ENCODE measurements at regions of chr6 and their contacts with region 1.

Region 1: GRCh38 chr6:105363100-105363754 is 39.7 kb downstream of the PREP start:
- DNase-seq: peak in 1 of 2 donors; percentile 32
- ATAC-seq: peak; percentile 39 to 62
- H3K4me3 ChIP-seq: no peak overlapping the region
- H3K27ac ChIP-seq: peak overlapping the region; percentile 63 to 74 (median 67)
- H3K4me1 ChIP-seq: peaks cover 27 to 29% of the 10 kb centered on the region in 2 donors
- H3K27me3 ChIP-seq: no peaks in the 10 kb centered on the region
- CTCF ChIP-seq: peak in 4 of 5 experiments; percentile 31 to 37 (median 35)
- POLR2A ChIP-seq: no peak

Region 2: DNA sequence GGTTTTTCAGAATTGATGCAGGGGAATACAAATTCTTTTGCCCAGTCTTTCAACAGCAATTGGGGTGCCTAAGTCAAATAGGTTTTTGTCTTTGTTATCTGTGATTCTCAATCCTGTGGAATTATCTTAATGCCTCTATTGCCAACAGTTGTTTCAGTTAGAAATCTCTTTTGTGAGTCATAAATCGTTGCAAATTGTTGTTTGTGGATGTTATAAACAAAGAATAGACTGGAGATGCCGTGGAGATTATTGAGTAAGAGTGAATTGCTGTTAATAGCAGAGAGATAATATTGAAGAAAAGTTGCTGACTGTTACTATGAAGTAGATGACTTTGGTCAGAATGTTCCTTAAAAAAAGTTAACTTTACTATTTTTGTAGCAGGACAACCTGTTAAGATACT is 119.7 kb before region 1 on chr6:
- in situ Hi-C with region 1: no loop called
- intact Hi-C with region 1: no loop called
- DNase-seq: no peak
- ATAC-seq: no peak
- H3K4me3 ChIP-seq: no peak overlapping the region
- H3K27ac ChIP-seq: no peak overlapping the region
- H3K4me1 ChIP-seq: peaks cover 0 to 3% of the 10 kb centered on the region in 2 donors
- H3K27me3 ChIP-seq: no peaks in the 10 kb centered on the region
- CTCF ChIP-seq: no peak
- POLR2A ChIP-seq: no peak

Region 3: GRCh38 chr6:105301072-105301503 is 62.1 kb before region 1 on chr6:
- in situ Hi-C with region 1: no loop called
- intact Hi-C with region 1: loop called (anchors 5 kb)
- DNase-seq: peak; percentile 28 to 58
- ATAC-seq: peak; percentile 85 to 91
- H3K4me3 ChIP-seq: no peak overlapping the region
- H3K27ac ChIP-seq: peak overlapping the region; percentile 74 to 78 (median 76)
- H3K4me1 ChIP-seq: peaks cover 29 to 33% of the 10 kb centered on the region in 2 donors
- H3K27me3 ChIP-seq: no peaks in the 10 kb centered on the region
- CTCF ChIP-seq: no peak
- POLR2A ChIP-seq: no peak

Region 4: DNA sequence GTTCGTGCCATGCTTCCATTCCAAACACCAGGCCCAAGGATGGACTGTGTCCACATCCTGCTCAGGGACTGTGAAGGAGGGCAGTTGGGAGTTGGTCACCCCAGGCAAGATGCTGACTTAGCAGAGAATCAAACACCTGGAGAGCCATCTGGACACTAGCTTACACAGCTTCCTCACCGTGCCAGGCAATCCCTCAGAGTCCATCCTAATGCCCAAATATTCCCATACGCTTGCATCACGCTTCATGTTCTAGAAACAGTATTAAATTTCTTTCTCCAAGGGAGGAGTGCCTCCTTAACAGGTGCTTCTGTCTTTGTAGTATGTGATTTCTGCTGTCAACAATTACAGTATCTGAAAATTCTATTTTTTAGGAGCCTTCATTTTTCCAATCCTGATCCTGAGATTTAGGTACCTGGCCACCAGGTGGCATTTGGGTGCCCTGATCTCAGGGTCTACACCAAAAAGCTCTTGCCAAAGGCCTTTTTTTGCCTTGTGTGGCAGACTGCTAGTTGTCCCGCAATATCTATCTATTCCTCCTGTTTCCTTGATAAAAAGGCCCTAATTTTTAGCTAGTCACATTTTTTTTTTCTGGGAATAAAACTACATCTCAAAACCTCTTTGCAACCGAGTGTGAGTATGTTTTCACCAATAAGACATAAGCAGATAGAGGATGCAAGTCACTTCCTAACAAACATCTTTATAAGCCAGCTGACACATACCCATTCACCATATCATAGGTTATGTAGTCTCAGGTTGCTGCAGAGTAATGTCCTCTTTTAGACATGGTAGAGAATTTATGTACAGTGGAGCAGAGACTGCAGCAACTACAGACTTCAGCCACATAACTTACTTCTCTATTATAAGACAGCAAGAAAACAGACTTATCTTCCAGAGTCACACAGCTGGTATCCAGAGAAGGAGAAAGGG is 45.4 kb before region 1 on chr6:
- in situ Hi-C with region 1: no loop called
- intact Hi-C with region 1: loop called (anchors 1 kb)
- DNase-seq: peak; percentile 49 to 57
- ATAC-seq: peak; percentile 79 to 93
- H3K4me3 ChIP-seq: no peak overlapping the region
- H3K27ac ChIP-seq: peak overlapping the region; percentile 11 to 98 (median 58)
- H3K4me1 ChIP-seq: peaks cover 57 to 61% of the 10 kb centered on the region in 2 donors
- H3K27me3 ChIP-seq: no peaks in the 10 kb centered on the region
- CTCF ChIP-seq: peak; percentile 27 to 60 (median 48)
- POLR2A ChIP-seq: no peak